Left ventricle myocardium inferior (tissue), 1 donor: ENCODE measurements at regions of chr4 and their contacts with region 1.

Region 1: GRCh38 chr4:20248155-20248558 is 3.5 kb upstream of the SLIT2 start:
- DNase-seq: no peak
- H3K4me3 ChIP-seq: no peak overlapping the region
- H3K27ac ChIP-seq: no peak overlapping the region
- H3K4me1 ChIP-seq: peaks cover 22% of the 10 kb centered on the region
- H3K27me3 ChIP-seq: peaks cover 23% of the 10 kb centered on the region
- CTCF ChIP-seq: peak; percentile 69

Region 2: GRCh38 chr4:19224820-19225219 is 1023.3 kb before region 1 on chr4:
- intact Hi-C with region 1: loop called (anchors 10 kb)
- DNase-seq: no peak
- H3K4me3 ChIP-seq: no peak overlapping the region
- H3K27ac ChIP-seq: no peak overlapping the region
- H3K4me1 ChIP-seq: no peaks in the 10 kb centered on the region
- H3K27me3 ChIP-seq: no peaks in the 10 kb centered on the region
- CTCF ChIP-seq: peak; percentile 52

Region 3: GRCh38 chr4:20109391-20109790 is 138.8 kb before region 1 on chr4:
- intact Hi-C with region 1: no loop called
- DNase-seq: no peak
- H3K4me3 ChIP-seq: no peak overlapping the region
- H3K27ac ChIP-seq: no peak overlapping the region
- H3K4me1 ChIP-seq: no peaks in the 10 kb centered on the region
- H3K27me3 ChIP-seq: no peaks in the 10 kb centered on the region
- CTCF ChIP-seq: no peak